ENCODE measurements at regions of chr1 and their contacts with region 1.

Region 1: DNA sequence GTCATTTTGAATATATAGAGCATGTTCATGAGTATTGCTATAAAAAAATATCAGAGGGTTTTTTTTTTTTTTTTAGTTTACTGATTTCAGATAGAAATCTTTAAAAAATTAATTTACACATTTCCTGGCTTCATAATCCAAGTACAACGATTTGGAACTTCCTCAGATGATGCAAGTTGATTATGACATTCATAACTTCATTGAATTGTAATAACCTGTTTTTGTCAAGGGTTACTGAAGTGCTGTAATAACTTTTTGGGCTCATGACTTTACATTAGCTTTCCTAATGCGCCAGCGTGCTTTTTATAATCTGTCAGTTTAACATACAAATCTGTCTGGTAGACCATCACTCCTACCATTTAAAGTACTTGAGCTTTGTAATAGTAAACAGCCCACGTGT is 81.3 kb downstream of the SASS6 start:
- DNase-seq: no peak
- ATAC-seq: no peak
- H3K4me3 Mint-ChIP-seq: no peak overlapping the region
- H3K27ac Mint-ChIP-seq: no peak overlapping the region
- H3K4me1 Mint-ChIP-seq: peaks cover 55% of the 10 kb centered on the region
- H3K27me3 Mint-ChIP-seq: no peaks in the 10 kb centered on the region
- CTCF ChIP-seq: no peak

Region 2: DNA sequence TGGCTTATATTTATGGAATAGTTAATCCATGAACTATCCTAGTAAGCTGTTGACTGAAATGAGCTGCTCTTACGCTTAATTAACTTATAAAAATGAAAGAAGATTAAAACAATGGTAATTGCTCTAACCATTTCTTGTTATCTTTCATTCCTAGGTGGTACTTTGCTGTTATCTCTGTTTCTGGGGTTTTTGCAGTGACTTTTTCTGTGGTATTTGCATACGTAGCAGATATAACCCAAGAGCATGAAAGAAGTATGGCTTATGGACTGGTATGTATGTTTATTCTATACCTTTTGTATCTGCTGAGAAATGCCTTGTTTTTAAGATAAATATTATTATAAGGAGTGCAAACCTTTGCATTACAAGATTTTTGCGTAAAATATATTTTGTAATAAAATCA is 10.3 kb after region 1 on chr1:
- CTCF ChIA-PET with region 1: interaction called, 3 read pairs
- POLR2A ChIA-PET with region 1: interaction called, 6 read pairs
- intact Hi-C with region 1: loop called (anchors 2 kb)
- DNase-seq: no peak
- ATAC-seq: no peak
- H3K4me3 Mint-ChIP-seq: no peak overlapping the region
- H3K27ac Mint-ChIP-seq: no peak overlapping the region
- H3K4me1 Mint-ChIP-seq: peaks cover 15% of the 10 kb centered on the region
- H3K27me3 Mint-ChIP-seq: no peaks in the 10 kb centered on the region
- CTCF ChIP-seq: no peak

Region 3: GRCh38 chr1:100265931-100266740 is 214.7 kb after region 1 on chr1 and contains the start of gene RTCA:
- CTCF ChIA-PET with region 1: no interaction called
- POLR2A ChIA-PET with region 1: no interaction called
- intact Hi-C with region 1: no loop called
- DNase-seq: peak; percentile 91
- ATAC-seq: peak; percentile 95
- H3K4me3 Mint-ChIP-seq: peak within 1 kb of the TSS; percentile 100
- H3K27ac Mint-ChIP-seq: peak within 1 kb of the TSS; percentile 98
- H3K4me1 Mint-ChIP-seq: peaks cover 38% of the 10 kb centered on the region
- H3K27me3 Mint-ChIP-seq: no peaks in the 10 kb centered on the region
- CTCF ChIP-seq: no peak
- total RNA-seq, gene RTCA: 32.3 and 34.5 TPM in 2 replicates

Measured in activated B cell treated with CpG ODN at 0.5 μM for 24 hours (primary cell).